PC-3 (cell line): ENCODE measurements at regions of chr6 and their contacts with region 1.

Region 1: DNA sequence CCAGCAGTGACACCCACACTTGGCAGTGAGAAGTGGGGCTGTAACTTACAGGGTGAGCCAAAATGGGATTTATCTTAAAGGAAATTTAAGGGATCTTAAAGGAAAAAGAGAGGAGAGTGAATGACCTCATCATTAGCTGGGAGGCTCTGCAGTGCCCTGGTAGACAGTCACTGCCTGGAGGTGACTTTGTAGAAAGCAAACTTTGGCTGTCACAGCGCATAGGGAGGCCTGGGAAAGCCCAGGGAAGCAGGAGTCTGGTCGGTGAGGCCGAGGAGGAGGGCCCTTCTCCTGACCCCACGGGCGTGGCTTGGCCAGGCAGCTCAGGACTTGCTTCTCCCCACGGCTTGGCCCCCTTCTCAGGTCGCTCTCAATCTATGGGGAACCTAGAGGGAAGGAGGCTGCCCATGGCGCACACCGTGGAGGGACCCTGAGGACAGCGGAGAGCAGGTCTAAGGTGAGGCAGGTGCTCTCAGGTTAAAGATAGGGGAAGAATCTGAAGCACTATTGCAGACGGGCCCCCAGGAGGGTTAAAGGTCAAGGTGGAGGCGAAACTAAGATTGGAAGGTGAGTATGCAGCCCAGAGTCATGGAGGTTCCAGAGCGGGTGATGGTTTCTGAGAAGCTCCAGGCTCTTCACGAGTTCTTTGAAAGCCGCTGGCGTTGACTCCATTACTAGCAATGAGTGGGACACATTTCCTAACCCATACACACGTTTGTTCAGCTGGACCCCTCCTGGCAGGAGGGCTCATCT is 15.6 kb upstream of the RIPK1 start:
- DNase-seq: no peak
- ATAC-seq: no peak
- H3K4me3 ChIP-seq: peak overlapping the region; percentile 74
- H3K27ac ChIP-seq: no peak overlapping the region
- H3K4me1 ChIP-seq: peaks cover 9% of the 10 kb centered on the region
- H3K27me3 ChIP-seq: no peaks in the 10 kb centered on the region
- CTCF ChIP-seq: no peak

Region 2: DNA sequence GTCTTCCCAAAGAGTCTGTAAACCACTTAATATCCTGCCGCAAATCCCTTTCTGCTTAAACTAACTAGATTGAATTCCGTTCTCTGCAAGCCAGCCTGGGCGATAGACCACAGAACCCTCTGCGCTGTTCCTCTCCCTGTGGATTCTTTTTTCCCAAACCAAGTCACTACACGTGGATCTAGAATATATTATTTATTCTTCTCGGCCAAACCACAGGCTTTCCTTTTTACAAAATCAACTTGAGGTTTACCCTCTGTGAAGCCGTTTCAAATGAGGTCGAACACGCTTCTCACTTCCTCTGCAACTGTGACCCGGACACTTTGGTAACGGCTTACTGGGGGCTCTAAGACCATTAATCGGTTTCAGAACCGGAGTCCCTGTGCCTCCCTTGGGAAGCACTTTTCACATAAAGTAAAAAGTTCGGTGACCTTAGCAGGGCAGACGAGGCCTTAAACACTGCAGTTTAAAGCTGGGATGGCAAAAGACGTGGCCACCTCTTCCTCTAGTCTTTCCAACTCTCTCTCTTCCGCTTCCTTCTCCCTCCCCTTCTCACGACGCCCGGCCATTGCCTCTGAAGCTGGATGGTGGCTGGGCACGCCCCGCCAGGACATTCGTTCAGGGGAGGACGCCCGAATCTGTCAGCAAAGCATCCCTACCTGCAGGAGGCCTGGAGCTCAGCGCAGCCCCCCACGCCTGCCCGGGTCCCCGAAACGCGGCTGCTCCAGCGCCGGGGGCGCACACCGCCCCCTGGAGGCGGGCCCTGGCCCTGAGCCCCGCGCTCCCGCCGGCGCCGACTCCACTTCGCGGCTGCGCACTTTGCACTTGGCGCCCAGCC is 1498.0 kb before region 1 on chr6:
- CTCF ChIA-PET with region 1: no interaction called
- POLR2A ChIA-PET with region 1: no interaction called
- intact Hi-C with region 1: loop called (anchors 5 kb)
- DNase-seq: peak; percentile 46
- ATAC-seq: peak; percentile 65
- H3K4me3 ChIP-seq: peak overlapping the region; percentile 63
- H3K27ac ChIP-seq: no peak overlapping the region
- H3K4me1 ChIP-seq: no peaks in the 10 kb centered on the region
- H3K27me3 ChIP-seq: no peaks in the 10 kb centered on the region; the same call in 1 of the 2 replicates
- CTCF ChIP-seq: peak; percentile 72

Region 3: DNA sequence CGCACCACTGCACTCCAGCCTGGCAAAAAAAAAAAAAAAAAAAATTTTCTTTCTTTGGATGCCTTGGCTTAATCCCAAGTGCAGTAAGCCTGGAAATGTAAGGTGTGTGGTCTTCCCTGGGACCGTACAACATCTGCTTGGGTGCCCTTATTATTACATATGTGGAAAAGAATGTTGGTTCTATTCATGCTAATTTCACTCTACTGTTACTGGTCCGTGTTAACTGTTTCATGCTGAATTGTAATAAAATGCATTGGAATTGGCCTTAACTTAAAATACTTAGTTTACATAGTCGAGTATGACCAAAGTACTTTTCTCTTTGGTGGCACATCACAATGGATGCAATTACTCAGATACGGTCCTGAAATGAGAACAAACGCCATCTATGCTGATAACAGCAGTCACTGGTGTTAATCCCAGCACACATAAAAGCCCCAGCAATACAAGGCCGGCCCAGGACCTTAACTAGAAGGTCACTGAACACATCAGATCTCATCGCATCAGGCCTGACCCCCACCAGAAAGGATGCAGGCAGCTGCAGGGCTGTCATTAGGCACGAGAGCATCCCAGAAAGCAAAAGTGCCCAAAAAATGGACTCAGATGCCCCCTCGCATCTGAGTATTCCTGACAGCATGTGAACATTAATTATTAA is 82.5 kb before region 1 on chr6:
- CTCF ChIA-PET with region 1: no interaction called
- POLR2A ChIA-PET with region 1: no interaction called
- intact Hi-C with region 1: no loop called
- DNase-seq: no peak
- ATAC-seq: no peak
- H3K4me3 ChIP-seq: peak overlapping the region; percentile 87
- H3K27ac ChIP-seq: peak overlapping the region; percentile 80
- H3K4me1 ChIP-seq: peaks cover 22% of the 10 kb centered on the region
- H3K27me3 ChIP-seq: no peaks in the 10 kb centered on the region
- CTCF ChIP-seq: no peak

Region 4: DNA sequence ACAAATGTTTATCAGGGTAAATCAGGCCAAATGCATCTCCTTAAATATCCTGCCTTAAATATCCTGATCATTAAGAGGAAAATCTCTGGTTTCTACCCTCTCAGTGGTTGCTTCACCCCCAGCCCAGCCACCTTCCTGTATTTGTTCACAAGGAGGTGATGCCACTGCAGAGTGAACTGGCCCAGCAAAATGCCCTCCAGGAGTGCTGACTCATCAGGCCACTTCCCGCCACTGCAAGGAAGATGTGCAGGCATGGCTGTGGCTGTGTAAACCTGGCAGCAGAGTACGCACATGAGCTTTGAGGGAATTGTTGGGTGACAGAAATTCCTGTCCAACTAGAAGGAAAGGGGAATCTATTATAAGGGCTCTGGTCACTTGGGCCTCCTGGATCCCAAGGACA is 39.2 kb before region 1 on chr6:
- CTCF ChIA-PET with region 1: no interaction called
- POLR2A ChIA-PET with region 1: no interaction called
- intact Hi-C with region 1: loop called (anchors 1 kb)
- DNase-seq: peak; percentile 94
- ATAC-seq: peak; percentile 100
- H3K4me3 ChIP-seq: no peak overlapping the region
- H3K27ac ChIP-seq: peak overlapping the region; percentile 61
- H3K4me1 ChIP-seq: peaks cover 16% of the 10 kb centered on the region
- H3K27me3 ChIP-seq: no peaks in the 10 kb centered on the region
- CTCF ChIP-seq: 0 out of 2 replicates have a peak, but pooled peaks have one; percentile 16